SK-N-SH (cell line): ENCODE measurements at regions of chr12 and their contacts with region 1.

Region 1: DNA sequence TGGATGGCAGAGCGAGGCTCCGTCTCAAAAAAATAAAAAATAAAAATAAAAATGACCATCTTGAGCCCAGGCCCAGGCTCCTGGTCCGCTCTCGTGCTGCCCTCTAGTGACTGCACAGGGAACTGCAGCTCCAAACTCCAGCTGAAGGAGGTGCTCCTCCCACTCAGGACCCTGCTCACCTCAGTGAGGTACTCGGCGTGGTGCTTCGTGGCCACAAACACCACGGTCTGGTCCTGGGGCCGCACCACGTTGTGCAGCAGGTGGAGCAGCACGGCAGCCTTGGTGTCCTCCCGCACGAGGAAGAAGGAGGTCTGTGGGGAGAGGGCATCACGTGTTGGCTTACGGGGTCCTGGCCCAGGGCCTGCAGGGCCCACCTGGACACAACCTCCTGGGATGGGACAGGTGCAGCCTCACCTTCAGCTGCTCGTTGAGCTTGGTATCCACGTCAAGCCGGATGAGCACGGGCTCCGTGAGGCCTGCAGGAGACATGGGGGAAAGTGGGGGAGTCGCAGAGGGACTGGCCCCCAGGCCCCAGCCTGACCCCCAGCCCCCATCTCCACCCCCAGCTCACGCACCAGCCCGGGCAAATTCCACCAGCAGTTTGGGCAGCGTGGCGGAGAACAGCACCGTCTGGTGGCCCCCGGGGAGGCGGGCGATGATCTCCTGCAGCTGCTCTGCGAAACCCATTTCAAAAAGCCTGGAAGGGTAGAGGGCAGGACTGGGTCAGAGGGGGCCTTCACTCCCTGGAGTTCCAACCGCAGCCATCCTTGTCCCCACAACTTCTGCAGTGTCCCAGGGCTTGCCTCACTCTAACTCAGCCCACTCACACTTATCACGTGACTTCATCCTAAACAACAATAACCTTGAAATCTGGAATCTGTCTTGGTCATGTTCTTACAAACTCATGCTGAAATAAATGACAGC is 10.6 kb downstream of the DDX54 start:
- DNase-seq: peak; percentile 91
- H3K4me3 ChIP-seq: no peak overlapping the region
- H3K27ac ChIP-seq: no peak overlapping the region
- H3K4me1 ChIP-seq: no peaks in the 10 kb centered on the region
- H3K27me3 ChIP-seq: no peaks in the 10 kb centered on the region
- CTCF ChIP-seq: peak; percentile 95
- EP300 ChIP-seq: no peak
- RAD21 ChIP-seq: peak; percentile 88

Region 2: DNA sequence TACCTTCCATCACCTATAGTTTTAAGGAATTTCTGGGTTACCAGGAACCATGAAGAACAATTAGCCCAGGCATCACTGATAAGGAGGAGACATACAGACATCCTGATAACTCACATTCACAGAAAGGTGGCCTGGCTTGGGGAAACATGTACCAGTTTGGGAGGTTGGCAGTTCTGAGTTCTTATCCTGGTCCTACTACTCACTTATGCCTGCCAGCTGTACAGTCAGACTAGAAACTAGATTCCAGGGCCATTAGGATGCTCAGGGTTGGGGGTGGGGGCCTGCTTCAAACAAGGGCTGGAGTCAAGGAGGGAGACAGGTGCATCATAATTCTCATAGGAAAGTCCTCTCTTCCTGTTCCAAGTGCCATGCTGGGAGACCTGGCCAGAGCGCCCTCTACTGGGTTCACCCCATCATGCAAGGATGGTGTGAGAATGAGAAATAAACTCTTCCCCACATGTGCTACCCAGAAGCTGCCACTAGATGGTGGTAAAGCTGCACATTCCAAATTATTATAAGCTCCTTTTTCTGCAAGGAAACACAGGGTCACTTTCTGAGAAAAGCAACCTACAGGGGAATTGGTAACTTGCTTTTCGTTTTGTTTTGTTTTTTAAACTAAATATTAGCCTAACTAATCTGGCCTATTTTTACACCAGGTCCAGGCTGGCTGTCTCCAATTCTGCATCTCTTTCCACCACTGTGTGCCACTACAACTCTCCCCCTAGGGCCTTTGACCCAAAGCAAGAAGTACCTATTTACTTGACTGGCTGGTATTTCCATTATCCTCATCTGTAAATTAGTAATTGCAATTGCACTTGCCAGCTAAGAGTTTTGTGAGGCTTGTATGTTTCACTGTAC is 182.0 kb before region 1 on chr12:
- CTCF ChIA-PET with region 1: interaction called, 12 read pairs
- POLR2A ChIA-PET with region 1: no interaction called
- DNase-seq: peak; percentile 70
- H3K4me3 ChIP-seq: peak overlapping the region in 1 of 2 experiments; percentile 54; a peak in 1 of 4 replicates
- H3K27ac ChIP-seq: no peak overlapping the region
- H3K4me1 ChIP-seq: no peaks in the 10 kb centered on the region
- H3K27me3 ChIP-seq: no peaks in the 10 kb centered on the region
- CTCF ChIP-seq: peak; percentile 85
- EP300 ChIP-seq: no peak
- RAD21 ChIP-seq: peak; percentile 81

Region 3: GRCh38 chr12:113056631-113057488 is 117.9 kb before region 1 on chr12 and contains the start of gene DTX1:
- CTCF ChIA-PET with region 1: interaction called, 113 read pairs
- POLR2A ChIA-PET with region 1: no interaction called
- DNase-seq: peak; percentile 88
- H3K4me3 ChIP-seq: peak within 1 kb of the TSS; percentile 58 to 59
- H3K27ac ChIP-seq: peak within 1 kb of the TSS in 1 of 2 experiments; percentile 73; a peak in 2 of 4 replicates
- H3K4me1 ChIP-seq: peaks cover 0 to 16% of the 10 kb centered on the region in 2 experiments; a peak in 1 of 4 replicates
- H3K27me3 ChIP-seq: peaks cover 14% of the 10 kb centered on the region; the same call in 1 of the 2 replicates
- CTCF ChIP-seq: no peak
- EP300 ChIP-seq: no peak
- RAD21 ChIP-seq: no peak
- polyA plus RNA-seq, gene DTX1: 0.72 and 1.0 TPM in 2 replicates

Region 4: DNA sequence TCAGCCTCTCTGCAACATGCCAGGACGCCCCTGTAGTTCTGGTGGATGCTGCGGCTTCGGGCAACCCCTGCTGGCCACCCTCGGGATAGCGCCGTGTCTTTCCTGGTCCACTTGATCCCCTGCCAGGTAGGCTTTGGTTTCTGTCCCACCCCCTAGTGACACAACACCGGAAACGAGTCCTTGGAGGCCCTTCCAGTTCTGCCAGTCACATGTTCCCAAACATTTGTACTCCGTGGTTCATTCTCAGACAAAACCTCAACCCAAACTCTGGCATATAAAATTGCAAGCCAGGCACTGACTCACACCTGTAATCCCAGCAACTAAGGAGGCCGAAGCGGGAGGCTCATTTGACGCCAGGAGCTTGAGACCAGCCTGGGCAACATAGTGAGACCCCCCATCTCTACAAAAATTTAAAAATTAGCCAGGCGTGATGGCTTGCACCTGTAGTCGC is 76.3 kb before region 1 on chr12:
- CTCF ChIA-PET with region 1: interaction called, 21 read pairs
- POLR2A ChIA-PET with region 1: interaction called, 4 read pairs
- DNase-seq: peak; percentile 92
- H3K4me3 ChIP-seq: peak overlapping the region in 1 of 2 experiments; percentile 5; a peak in 1 of 4 replicates
- H3K27ac ChIP-seq: peak overlapping the region in 1 of 2 experiments; percentile 71; a peak in 1 of 4 replicates
- H3K4me1 ChIP-seq: peaks cover 0 to 14% of the 10 kb centered on the region in 2 experiments; a peak in 1 of 4 replicates
- H3K27me3 ChIP-seq: no peaks in the 10 kb centered on the region
- CTCF ChIP-seq: peak; percentile 77
- EP300 ChIP-seq: no peak
- RAD21 ChIP-seq: peak; percentile 80

Region 5: DNA sequence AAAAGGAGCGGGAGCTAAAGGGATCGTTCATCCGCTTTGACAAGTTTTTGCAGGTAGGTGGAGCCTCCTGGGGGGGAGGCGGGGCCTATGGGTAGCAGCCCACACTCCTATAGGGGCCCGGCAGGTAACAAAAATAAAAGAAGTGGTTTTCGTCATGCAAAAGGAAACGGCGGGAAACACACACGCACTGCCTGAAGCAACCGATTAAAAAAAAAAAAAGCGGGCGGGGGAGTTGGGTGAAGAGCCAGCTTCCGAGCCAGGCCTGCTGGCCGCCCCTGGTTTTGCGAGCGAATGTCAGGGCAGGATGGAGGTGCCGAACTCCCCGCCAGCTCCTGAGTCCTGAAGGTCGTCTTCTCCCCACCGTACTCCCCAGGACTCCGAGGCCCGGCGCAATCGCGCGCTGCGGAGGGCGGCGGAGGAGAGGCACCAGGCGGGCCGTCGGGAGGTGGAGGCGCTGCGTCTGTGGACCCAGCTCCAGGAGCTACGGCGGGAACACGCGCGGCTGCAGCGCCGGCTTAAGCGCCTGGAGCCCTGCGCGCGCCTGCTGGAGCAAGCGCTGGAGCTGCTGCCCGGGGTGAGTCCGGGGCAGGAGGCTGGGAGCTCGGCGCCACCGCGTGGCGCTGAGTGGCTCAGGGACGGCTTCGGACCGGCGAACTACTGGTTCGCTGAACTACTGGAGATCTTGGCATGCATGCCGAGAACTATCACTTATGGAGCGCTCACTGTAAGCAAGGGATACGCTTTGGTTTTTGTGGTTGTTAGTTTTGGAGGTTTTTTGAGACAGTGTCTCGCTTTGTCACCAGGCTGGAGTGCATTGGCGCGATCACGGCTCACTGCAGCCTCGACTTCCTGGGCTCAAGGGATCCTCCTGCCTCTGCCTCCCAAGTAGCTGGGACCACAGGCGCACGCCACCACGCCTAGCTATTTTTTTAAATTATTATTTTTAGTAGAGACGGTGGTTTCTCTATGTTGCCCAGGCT is 21.6 kb before region 1 on chr12:
- CTCF ChIA-PET with region 1: interaction called, 32 read pairs
- POLR2A ChIA-PET with region 1: no interaction called
- DNase-seq: peak; percentile 93
- H3K4me3 ChIP-seq: peak overlapping the region; percentile 34 to 56; a peak in 3 of 4 replicates
- H3K27ac ChIP-seq: no peak overlapping the region
- H3K4me1 ChIP-seq: peaks cover 5 to 11% of the 10 kb centered on the region in 2 experiments; a peak in 2 of 4 replicates
- H3K27me3 ChIP-seq: peaks cover 24% of the 10 kb centered on the region
- CTCF ChIP-seq: peak; percentile 53
- EP300 ChIP-seq: no peak
- RAD21 ChIP-seq: peak; percentile 69

Region 6: DNA sequence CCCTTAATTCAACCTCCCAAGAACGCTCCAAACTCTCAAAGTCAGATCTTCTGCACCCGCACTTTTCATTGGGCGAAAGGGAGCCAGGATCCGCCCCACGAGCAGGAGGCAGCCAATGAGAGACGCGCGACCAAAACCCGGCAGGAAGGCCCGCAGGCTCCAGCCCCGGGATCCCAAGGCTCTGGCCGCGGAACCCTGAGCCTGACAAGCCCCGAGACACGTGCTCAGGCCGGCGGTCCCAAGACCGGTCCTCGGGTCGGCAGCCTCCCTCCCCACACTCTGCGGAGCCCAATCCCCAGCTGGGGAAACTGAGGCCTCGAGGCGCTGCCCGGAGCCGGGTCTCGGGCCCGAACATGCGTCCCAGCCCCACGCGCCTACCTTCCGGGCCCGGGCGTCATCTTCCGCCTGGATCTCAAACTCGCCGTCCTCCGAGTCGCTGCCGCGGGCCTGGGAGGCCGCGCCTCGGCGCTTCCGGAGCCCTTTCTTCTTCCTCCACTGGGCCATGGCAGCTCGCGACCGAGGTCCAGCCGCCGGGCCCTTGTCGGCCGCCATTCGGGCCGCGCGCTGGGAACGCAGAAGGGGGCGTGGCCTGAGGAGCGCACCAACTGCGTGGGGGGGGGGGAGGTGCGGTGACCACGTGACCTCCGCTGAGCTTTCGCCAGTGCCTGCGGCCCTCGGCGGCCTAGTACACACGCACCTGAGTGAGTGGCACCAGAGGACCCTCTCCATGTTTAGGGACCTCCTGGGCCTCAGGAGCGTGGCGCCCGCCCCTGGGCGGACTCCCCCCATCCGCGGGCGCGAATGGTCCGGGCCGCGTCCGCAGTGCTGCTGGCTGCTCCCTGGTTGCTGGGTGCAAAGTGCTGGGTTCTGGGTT is 10.4 kb after region 1 on chr12 and contains the starts of genes DDX54 and RITA1:
- CTCF ChIA-PET with region 1: interaction called, 12 read pairs
- POLR2A ChIA-PET with region 1: no interaction called
- DNase-seq: peak; percentile 93
- H3K4me3 ChIP-seq: peak within 1 kb of the TSS; percentile 76 to 92
- H3K27ac ChIP-seq: peak within 1 kb of the TSS; percentile 81 to 93
- H3K4me1 ChIP-seq: peaks cover 5 to 10% of the 10 kb centered on the region in 2 experiments; a peak in 2 of 4 replicates
- H3K27me3 ChIP-seq: no peaks in the 10 kb centered on the region
- CTCF ChIP-seq: no peak
- EP300 ChIP-seq: peak in 1 of 2 experiments; percentile 49; a peak in 1 of 4 replicates
- RAD21 ChIP-seq: no peak
- polyA plus RNA-seq, gene DDX54: 56.5 and 69.9 TPM in 2 replicates
- polyA plus RNA-seq, gene RITA1: 18.7 and 21.1 TPM in 2 replicates